AG04449 (cell line): ENCODE measurements at regions of chr20 and their contacts with region 1.

Region 1: GRCh38 chr20:57061058-57061900 is 205.2 kb downstream of the BMP7 start:
- DNase-seq: no peak
- H3K4me3 ChIP-seq: no peak overlapping the region
- CTCF ChIP-seq: peak; percentile 59

Region 2: GRCh38 chr20:57071283-57071770 is 10.0 kb after region 1 on chr20:
- CTCF ChIA-PET with region 1: interaction called, 11 read pairs
- POLR2A ChIA-PET with region 1: no interaction called
- DNase-seq: no peak
- H3K4me3 ChIP-seq: no peak overlapping the region
- CTCF ChIP-seq: no peak

Region 3: GRCh38 chr20:57080788-57081187 is 19.5 kb after region 1 on chr20:
- CTCF ChIA-PET with region 1: interaction called, 10 read pairs
- POLR2A ChIA-PET with region 1: no interaction called
- DNase-seq: no peak
- H3K4me3 ChIP-seq: no peak overlapping the region
- CTCF ChIP-seq: peak; percentile 26